SK-N-SH (cell line): ENCODE measurements at regions of chr15 and their contacts with region 1.

Region 1: GRCh38 chr15:90954712-90955671 is at the start of gene RCCD1:
- DNase-seq: peak; percentile 98
- H3K4me3 ChIP-seq: peak within 1 kb of the TSS; percentile 76 to 81
- H3K27ac ChIP-seq: peak within 1 kb of the TSS; percentile 85 to 88
- H3K4me1 ChIP-seq: peaks cover 0 to 23% of the 10 kb centered on the region in 2 experiments; a peak in 1 of 4 replicates
- H3K27me3 ChIP-seq: no peaks in the 10 kb centered on the region
- CTCF ChIP-seq: no peak
- EP300 ChIP-seq: no peak
- RAD21 ChIP-seq: no peak
- polyA plus RNA-seq, gene RCCD1: 19.5 and 21.2 TPM in 2 replicates

Region 2: DNA sequence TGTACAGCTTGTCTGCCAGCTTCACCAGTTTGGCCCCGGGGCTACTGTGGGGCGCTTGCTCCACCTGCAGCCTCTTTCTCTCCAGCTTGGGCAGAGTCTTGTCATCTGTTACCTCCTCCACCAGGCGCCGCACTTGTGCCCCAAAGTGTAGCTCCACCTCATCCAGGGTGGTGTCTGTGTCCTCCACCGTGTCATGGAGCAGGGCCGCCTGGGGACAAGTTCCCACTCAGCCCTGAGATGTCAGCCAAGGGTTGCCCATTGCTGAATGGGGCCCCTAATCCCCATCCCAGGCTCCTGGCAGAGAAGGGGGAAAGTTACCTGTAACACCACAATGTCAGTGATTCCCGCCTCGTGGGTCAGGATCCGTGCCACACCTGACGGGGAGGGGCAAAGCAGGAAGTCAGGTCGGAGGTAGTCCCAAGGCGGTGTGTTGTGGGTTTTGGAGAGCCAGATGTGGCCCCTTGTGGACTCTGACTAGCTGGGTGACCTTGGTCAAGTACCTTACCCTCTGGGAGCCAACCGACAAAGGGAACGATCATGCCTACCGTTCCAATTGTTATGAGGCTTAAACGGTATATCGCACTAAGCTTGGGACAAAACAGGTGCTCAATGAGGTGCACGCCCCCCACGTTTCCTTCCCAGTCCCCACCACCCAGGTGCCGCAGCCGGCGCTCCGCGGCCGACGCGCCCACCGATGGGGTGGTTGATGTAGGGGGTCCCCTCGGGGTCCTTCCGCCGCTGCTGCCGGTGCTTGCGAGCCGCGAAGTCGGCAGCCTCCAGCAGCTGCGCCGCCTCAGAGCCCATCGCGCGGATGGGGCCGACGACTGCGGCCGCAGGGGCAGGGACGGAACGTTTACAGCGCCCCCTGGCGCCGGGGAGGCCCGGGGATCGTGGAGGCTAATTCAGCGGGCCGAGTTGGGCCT is 23.0 kb before region 1 on chr15 and contains the start of gene HDDC3:
- CTCF ChIA-PET with region 1: interaction called, 142 read pairs
- POLR2A ChIA-PET with region 1: interaction called, 23 read pairs
- DNase-seq: peak; percentile 94
- H3K4me3 ChIP-seq: peak within 1 kb of the TSS; percentile 84 to 89
- H3K27ac ChIP-seq: peak within 1 kb of the TSS; percentile 32 to 80; a peak in 3 of 4 replicates
- H3K4me1 ChIP-seq: peaks cover 13 to 41% of the 10 kb centered on the region in 2 experiments; a peak in 2 of 4 replicates
- H3K27me3 ChIP-seq: no peaks in the 10 kb centered on the region
- CTCF ChIP-seq: peak; percentile 87
- EP300 ChIP-seq: no peak
- RAD21 ChIP-seq: peak; percentile 48
- polyA plus RNA-seq, gene HDDC3: 24.2 and 25.8 TPM in 2 replicates

Region 3: GRCh38 chr15:90994417-90995311 is 39.7 kb after region 1 on chr15 and contains the start of gene PRC1:
- CTCF ChIA-PET with region 1: interaction called, 16 read pairs
- POLR2A ChIA-PET with region 1: interaction called, 3 read pairs
- DNase-seq: peak; percentile 99
- H3K4me3 ChIP-seq: peak within 1 kb of the TSS; percentile 80 to 83
- H3K27ac ChIP-seq: peak within 1 kb of the TSS; percentile 83 to 85
- H3K4me1 ChIP-seq: peaks cover 0 to 10% of the 10 kb centered on the region in 2 experiments; a peak in 2 of 4 replicates
- H3K27me3 ChIP-seq: no peaks in the 10 kb centered on the region
- CTCF ChIP-seq: no peak
- EP300 ChIP-seq: 0 out of 4 replicates have a peak, but pooled peaks of 1 of the 2 experiments have one; percentile 15
- RAD21 ChIP-seq: no peak
- polyA plus RNA-seq, gene PRC1: 125 and 132 TPM in 2 replicates

Region 4: DNA sequence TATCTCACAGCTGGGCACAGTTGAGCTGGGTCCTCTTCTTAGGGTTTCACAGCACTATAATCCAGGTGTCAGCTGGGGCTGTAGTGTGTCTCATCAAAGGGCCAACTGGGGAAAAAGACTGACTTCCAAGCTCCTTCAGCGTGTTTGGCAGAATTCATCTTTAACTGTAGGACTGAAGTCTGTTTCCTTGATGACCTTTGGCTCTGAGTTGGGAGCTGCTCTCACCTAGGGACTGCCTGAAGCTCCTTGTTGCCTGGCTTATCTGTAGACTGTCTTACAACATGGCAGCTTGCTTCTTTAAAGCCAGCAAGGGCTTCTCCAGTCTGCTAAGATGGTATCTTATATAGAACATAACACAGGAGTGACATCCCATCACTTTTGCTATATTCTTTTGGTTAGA is 72.7 kb after region 1 on chr15:
- CTCF ChIA-PET with region 1: interaction called, 41 read pairs
- POLR2A ChIA-PET with region 1: interaction called, 7 read pairs
- DNase-seq: no peak
- H3K4me3 ChIP-seq: no peak overlapping the region
- H3K27ac ChIP-seq: no peak overlapping the region
- H3K4me1 ChIP-seq: peaks cover 0 to 5% of the 10 kb centered on the region in 2 experiments; a peak in 2 of 4 replicates
- H3K27me3 ChIP-seq: no peaks in the 10 kb centered on the region
- CTCF ChIP-seq: no peak
- EP300 ChIP-seq: no peak
- RAD21 ChIP-seq: no peak

Region 5: DNA sequence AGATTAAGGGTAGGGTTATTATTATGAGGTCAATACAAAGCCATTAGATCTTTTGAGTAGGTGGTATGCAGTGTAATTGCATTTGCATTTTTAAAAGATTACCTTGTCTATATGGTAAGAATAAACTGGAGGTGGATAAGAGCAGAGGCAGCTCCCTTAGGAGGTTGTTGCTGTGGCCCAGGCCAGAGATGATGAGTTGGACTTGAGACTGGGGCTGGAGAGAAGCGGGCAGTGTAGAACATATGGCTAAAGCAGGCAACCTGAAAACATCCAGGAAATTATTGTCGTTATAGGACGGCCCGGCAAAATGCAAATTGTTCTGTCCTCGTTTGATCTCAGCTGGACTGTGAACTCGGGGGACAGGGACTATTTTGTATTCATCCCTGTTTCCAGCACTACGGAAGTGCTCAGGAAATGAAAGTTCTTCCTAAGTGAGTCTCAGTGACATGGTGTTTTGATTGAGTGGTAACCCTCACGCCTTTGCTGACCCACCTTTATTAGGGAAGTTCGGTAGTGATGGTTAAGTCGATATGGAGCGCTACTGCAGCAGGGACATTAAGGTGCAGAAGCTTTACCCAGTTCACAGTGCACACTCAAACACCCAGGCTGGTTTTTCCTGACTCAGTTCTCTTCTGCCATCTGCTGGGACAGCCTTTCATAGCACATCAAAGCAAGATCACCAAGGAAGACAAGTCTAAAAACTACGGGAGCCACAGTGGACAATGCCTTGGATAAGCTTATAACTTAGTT is 94.6 kb after region 1 on chr15:
- CTCF ChIA-PET with region 1: interaction called, 186 read pairs
- POLR2A ChIA-PET with region 1: interaction called, 5 read pairs
- DNase-seq: peak; percentile 64
- H3K4me3 ChIP-seq: peak overlapping the region in 1 of 2 experiments; percentile 11; a peak in 1 of 4 replicates
- H3K27ac ChIP-seq: no peak overlapping the region
- H3K4me1 ChIP-seq: peaks cover 0 to 2% of the 10 kb centered on the region in 2 experiments; a peak in 1 of 4 replicates
- H3K27me3 ChIP-seq: peaks cover 10% of the 10 kb centered on the region; the same call in 1 of the 2 replicates
- CTCF ChIP-seq: peak; percentile 74
- EP300 ChIP-seq: no peak
- RAD21 ChIP-seq: peak; percentile 93

Region 6: DNA sequence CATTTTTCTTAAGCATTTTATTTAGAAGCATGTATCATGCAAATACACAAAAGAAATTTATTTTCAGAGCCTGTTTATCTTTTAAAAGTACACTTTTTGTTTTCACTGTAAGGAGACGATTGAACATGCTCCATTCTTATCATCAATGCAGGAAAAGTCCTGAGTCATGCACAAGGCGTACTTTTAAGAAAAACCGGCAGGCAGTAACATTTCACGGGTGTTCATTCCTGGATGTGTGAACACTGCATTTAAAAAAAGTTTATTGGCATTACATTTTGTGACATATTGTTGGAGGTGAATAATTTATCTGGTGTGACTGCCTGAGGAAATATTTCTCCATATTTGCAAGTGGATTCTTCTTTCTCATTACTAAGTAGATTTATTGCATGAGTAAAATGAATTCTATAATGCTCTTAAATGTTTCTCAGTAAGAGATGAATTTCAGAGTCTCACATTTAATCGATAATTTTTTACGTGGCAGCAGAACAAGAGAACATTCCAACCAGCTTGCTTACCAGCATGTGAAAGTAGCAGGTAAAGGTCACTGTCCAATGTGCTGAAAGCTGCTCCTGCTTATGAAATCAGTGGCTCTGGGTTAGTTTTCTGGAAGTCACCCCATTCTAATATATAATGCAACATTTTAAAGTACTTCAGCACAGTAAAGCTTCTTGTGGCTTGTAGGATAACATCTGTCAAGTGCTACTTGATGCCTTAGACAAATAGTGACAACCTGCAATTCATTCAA is 232.1 kb after region 1 on chr15:
- CTCF ChIA-PET with region 1: no interaction called
- POLR2A ChIA-PET with region 1: no interaction called
- DNase-seq: no peak
- H3K4me3 ChIP-seq: no peak overlapping the region
- H3K27ac ChIP-seq: no peak overlapping the region
- H3K4me1 ChIP-seq: no peaks in the 10 kb centered on the region
- H3K27me3 ChIP-seq: no peaks in the 10 kb centered on the region
- CTCF ChIP-seq: no peak
- EP300 ChIP-seq: no peak
- RAD21 ChIP-seq: no peak

Region 7: GRCh38 chr15:91271565-91272153 is 316.7 kb after region 1 on chr15:
- CTCF ChIA-PET with region 1: interaction called, 28 read pairs
- POLR2A ChIA-PET with region 1: no interaction called
- DNase-seq: peak; percentile 69
- H3K4me3 ChIP-seq: peak overlapping the region in 1 of 2 experiments; percentile 42; a peak in 1 of 4 replicates
- H3K27ac ChIP-seq: no peak overlapping the region
- H3K4me1 ChIP-seq: no peaks in the 10 kb centered on the region
- H3K27me3 ChIP-seq: no peaks in the 10 kb centered on the region
- CTCF ChIP-seq: peak; percentile 86
- EP300 ChIP-seq: no peak
- RAD21 ChIP-seq: peak; percentile 95